Left ventricle myocardium superior (tissue), 1 donor: ENCODE measurements at regions of chr1 and their contacts with region 1.

Region 1: DNA sequence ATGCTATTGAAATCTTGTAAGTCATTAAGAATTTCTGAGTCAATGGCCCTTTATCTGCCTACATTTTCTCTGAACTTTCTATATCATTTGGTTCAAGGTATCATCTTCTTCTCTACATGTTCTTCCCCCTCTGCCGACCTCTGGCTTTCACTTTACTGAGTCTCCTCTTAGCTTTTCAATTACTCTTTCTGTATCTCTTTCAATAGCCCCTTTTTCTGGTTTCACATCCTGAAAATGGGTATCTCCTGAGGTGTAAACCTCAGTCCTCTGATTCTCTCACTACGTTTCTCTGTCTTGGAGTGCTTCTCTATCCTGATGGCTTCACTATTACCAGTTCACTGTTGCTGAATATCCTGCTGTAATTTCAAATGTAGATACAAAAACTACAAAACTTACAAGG is 98.9 kb downstream of the LYST start:
- DNase-seq: no peak
- ATAC-seq: no peak

Region 2: DNA sequence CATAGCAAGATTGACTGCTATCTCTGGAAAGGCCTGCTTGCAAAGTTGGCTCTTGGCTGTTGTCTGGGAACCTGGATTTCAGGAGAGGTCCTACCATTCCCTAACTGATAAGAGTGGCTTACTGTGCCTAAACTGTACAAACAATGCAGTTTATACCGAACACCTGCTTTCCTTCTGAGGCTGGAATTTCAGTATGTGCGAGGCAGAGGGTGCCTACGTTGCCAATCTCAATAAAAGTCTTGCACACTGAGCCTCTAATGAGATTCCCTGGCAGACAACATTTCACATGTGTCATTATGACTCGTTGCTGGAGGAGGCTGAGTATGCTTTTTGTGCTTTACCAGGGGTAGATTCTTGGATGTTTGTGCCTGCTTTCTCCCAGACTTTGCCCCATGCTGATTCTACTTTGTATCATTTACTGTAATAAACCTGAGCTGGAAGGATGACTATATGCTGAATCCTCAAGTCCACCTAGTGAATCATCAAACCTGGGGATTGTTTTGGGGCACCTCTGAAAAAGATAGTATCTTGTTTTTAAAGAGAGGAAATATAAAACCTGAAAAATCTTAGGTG is 59.3 kb before region 1 on chr1:
- intact Hi-C with region 1: loop called (anchors 10 kb)
- DNase-seq: no peak
- ATAC-seq: no peak